A549 (cell line): ENCODE measurements at regions of chr22 and their contacts with region 1.

Region 1: GRCh38 chr22:46542011-46542985 is 4.9 kb upstream of the CELSR1 start:
- DNase-seq: peak; percentile 72 to 83
- ATAC-seq: peak; percentile 87 to 93
- H3K4me3 ChIP-seq: no peak overlapping the region
- H3K27ac ChIP-seq: peak overlapping the region; percentile 47 to 78; a peak in 5 of 6 replicates
- H3K4me1 ChIP-seq: peaks cover 41% of the 10 kb centered on the region
- CTCF ChIP-seq: peak; percentile 81
- EP300 ChIP-seq: no peak
- POLR2A ChIP-seq: no peak
- RAD21 ChIP-seq: peak; percentile 94 to 95

Region 2: DNA sequence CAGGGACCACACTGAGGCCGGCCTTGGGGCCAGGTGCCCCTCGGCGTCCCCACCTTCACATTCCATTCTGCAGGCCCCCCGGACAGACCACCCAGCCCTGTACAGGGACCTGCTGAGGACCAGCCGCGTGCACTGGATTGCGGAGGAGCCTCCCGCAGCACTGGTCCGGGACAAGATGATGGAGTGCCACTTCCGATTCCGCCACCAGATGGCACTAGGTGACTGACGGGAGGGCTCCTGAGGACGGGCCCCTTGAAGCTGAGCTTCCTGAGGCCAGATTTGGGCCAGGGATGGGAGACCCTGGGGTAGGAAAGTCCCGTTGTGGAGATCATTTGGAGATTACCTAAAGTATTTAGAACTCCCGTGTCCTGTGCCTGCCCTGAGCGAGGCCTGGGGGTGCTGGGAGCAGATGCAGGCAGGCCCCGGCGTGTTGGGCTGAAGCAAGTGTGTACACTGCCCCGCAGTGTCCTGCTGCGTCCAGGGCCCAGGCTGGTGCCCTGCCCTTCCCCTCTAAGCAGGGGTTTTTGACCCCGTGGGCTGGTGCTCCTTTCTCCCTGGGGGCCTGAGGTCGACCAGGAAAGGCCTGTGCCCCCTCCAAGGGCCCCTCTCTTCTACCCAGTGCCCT is 186.8 kb before region 1 on chr22:
- CTCF ChIA-PET with region 1: interaction called, 184 read pairs
- POLR2A ChIA-PET with region 1: no interaction called
- DNase-seq: peak; percentile 59 to 72
- ATAC-seq: peak; percentile 58 to 82
- H3K4me3 ChIP-seq: no peak overlapping the region
- H3K27ac ChIP-seq: peak overlapping the region in 1 of 2 experiments; percentile 76; a peak in 3 of 6 replicates
- H3K4me1 ChIP-seq: peaks cover 14% of the 10 kb centered on the region
- CTCF ChIP-seq: peak; percentile 61
- EP300 ChIP-seq: no peak
- POLR2A ChIP-seq: no peak
- RAD21 ChIP-seq: peak; percentile 81 to 86

Region 3: DNA sequence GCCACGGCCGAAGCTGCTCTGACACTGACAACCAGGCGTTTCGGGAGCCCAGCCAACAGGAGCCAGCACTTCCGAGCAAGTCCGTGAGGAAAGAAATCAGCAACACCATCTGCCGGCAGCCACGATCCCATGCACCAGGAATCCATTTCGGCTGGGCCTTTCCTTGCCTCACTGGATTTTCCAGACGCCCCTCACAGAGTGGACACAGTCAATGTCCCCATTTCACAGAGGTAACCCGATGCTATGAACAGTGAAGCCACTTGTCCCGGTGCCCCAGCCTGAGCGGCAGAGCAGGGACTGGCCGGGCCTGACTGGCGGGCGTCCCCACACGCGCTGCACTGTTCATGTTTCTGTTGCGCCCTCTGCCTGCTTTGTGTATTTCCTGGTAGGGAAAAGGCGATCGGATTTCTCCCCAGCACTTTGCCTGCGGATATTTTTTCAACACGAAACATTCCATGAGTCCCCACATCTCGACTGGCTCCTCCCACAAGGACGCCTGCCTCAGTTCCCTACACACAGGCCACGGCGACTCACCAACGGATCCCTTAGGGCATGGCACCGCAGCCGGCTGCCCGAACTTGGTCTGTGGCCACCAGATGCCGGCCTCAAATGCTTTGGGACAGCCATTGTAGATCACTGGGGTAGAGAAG is 151.5 kb before region 1 on chr22:
- CTCF ChIA-PET with region 1: interaction called, 11 read pairs
- POLR2A ChIA-PET with region 1: no interaction called
- DNase-seq: no peak
- ATAC-seq: no peak
- H3K4me3 ChIP-seq: no peak overlapping the region
- H3K27ac ChIP-seq: no peak overlapping the region
- H3K4me1 ChIP-seq: no peaks in the 10 kb centered on the region
- CTCF ChIP-seq: no peak
- EP300 ChIP-seq: no peak
- POLR2A ChIP-seq: no peak
- RAD21 ChIP-seq: no peak

Region 4: DNA sequence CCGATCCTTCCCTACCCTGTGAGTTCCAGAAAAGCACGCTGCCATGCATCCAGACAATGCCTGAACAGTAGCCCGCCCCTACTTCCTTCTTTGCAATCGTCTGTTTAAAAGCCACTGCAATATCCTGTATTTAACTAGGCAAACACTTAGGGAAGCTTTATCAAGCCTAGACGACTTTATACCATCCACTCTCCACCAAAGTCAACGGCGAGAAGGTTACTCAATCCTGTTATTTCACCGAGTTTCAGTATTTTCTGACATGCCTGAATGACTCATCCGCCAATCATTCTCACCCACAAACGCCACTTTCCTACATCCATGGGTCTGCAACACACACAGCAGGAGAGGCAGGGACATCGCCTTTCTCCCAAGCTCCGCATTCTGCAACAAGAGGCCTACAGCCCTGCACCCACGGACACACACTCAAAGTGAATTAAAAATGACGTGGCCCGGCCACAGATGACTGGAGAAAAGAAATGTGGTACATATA is 14.1 kb before region 1 on chr22:
- CTCF ChIA-PET with region 1: interaction called, 19 read pairs
- POLR2A ChIA-PET with region 1: no interaction called
- DNase-seq: peak; percentile 84 to 93
- ATAC-seq: peak; percentile 83 to 86
- H3K4me3 ChIP-seq: 0 out of 3 replicates have a peak overlapping the region, but pooled peaks have one; percentile 22
- H3K27ac ChIP-seq: peak overlapping the region; percentile 91 to 99
- H3K4me1 ChIP-seq: peaks cover 85% of the 10 kb centered on the region
- CTCF ChIP-seq: no peak
- EP300 ChIP-seq: peak; percentile 65 to 78; a peak in 3 of 5 replicates
- POLR2A ChIP-seq: no peak
- RAD21 ChIP-seq: peak; percentile 8 to 25; a peak in 1 of 5 replicates

Region 5: DNA sequence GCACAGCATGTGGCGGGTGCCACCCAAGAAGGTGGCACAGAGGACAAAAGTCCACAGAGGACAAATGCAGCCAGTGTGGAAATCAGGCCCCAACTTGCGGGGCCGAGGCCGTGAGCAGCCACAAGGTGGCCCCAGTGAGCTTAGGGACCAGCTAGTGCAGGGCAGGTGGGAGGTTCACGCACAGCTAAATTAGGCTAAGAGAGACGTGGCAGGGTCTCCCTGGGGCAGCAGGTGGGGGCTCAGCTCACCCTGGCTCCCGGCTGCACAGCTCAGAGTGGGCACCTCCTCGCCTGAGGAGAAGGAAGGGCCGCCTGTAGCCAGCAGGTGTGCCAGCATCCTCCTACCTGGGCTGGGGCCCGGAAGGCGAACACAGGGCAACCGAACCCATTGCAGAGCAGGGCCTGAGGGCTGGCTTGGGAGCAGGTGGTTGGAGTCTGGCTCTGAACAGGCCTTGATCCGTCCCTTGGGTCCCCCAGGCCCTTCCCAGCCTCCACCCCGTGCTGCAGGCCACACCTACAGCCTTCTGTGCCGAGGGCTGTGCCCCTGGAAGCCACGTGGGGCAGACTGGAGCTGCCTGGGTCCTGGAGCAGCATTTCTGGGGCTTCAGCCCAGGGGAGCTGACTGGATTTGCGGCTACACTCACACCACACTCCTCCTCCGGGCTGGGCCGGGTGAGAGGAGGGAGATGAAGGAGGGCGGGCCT is 21.2 kb after region 1 on chr22:
- CTCF ChIA-PET with region 1: interaction called, 10 read pairs
- POLR2A ChIA-PET with region 1: no interaction called
- DNase-seq: peak; percentile 68 to 71
- ATAC-seq: peak; percentile 88 to 91
- H3K4me3 ChIP-seq: no peak overlapping the region
- H3K27ac ChIP-seq: peak overlapping the region; percentile 74 to 80
- H3K4me1 ChIP-seq: peaks cover 13% of the 10 kb centered on the region
- CTCF ChIP-seq: peak; percentile 60
- EP300 ChIP-seq: no peak
- POLR2A ChIP-seq: no peak
- RAD21 ChIP-seq: peak; percentile 70 to 75

Region 6: GRCh38 chr22:46604306-46604690 is 62.0 kb after region 1 on chr22:
- CTCF ChIA-PET with region 1: no interaction called
- POLR2A ChIA-PET with region 1: no interaction called
- DNase-seq: no peak
- ATAC-seq: no peak
- H3K4me3 ChIP-seq: no peak overlapping the region
- H3K27ac ChIP-seq: no peak overlapping the region
- H3K4me1 ChIP-seq: no peaks in the 10 kb centered on the region
- CTCF ChIP-seq: no peak
- EP300 ChIP-seq: no peak
- POLR2A ChIP-seq: no peak
- RAD21 ChIP-seq: no peak

Region 7: DNA sequence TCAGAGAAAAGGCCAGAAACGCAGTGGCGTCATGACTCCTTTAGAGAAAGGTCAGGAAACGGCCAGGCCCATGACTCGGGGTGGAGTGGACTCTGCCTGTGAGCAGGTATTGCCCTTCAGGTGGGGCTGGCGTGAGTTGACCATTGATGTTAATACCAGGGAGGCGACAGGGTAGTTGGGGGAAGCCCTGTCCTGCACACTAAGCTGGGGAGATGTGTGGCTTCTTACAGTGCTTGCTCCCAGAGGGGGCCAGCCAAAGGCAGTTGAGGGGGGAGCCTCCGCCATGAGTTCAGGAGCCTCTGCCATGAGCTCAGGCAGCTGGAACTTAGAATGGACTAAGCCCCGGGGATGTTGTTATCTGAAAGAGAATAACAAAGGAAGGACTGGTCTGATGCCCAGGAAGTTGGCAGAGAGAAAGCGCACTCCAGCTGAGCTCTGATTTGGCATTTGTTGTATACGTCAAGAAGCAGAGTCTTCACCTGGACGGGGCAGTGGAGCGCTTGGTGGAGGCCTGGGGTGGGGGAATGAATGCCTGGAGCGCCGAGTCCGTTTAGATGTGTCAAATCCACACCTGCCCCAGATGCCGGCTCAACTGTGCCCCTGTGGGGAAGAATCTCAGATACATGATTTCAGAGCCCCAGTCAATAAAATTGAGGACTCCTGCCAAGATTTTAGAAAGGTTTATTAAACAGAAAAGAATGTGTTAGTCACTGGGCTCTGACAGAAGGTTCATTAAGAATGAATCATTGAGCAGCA is 442.6 kb after region 1 on chr22:
- CTCF ChIA-PET with region 1: no interaction called
- POLR2A ChIA-PET with region 1: no interaction called
- DNase-seq: no peak
- ATAC-seq: no peak
- H3K4me3 ChIP-seq: no peak overlapping the region
- H3K27ac ChIP-seq: no peak overlapping the region
- H3K4me1 ChIP-seq: no peaks in the 10 kb centered on the region
- CTCF ChIP-seq: no peak
- EP300 ChIP-seq: no peak
- POLR2A ChIP-seq: no peak
- RAD21 ChIP-seq: no peak